Right ventricle myocardium inferior (tissue), 1 donor: ENCODE measurements at regions of chr17 and their contacts with region 1.

Region 1: GRCh38 chr17:38667099-38667786 is 7.5 kb downstream of the EPOP start:
- DNase-seq: peak; percentile 75
- ATAC-seq: peak; percentile 68

Region 2: GRCh38 chr17:38351412-38352222 is 315.6 kb before region 1 on chr17 and contains the start of gene SOCS7:
- intact Hi-C with region 1: loop called (anchors 10 kb)
- DNase-seq: peak; percentile 96
- ATAC-seq: peak; percentile 98
- total RNA-seq, gene SOCS7: 12.0 TPM

Region 3: DNA sequence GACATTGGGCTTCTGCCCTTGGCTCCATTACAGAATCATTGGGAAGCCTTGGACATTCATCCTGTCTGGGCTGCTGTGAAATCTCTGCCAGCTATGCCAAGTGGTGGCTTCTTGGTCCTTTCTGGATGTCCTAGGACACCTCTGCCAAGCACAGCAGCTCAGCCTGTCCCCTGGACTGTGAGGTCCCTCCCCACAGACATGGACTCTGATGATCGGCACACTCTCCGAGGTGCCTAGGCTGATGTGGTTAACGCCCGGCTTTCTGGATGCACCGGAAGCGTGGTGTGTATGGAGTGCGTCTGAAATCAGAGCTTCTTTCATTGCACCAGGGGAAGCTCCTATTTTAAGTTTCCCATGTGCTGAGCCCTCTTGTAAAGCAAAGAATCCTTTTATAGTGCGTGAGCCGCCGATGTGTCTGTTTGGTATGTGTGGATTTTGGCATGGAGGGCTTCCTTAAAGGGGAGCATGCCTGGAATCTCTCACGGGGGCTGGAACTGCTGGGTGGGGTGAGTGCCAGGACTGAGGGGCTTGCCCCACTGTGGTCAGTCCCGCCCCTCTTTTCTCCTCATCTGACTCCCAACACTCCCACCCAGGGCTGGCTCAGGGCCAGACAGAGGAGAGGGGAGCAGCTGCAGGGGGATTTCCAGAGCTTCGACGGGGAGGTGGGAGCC is 245.9 kb before region 1 on chr17:
- intact Hi-C with region 1: loop called (anchors 5 kb)
- DNase-seq: no peak
- ATAC-seq: peak; percentile 5

Region 4: GRCh38 chr17:38485146-38485468 is 182.1 kb before region 1 on chr17:
- intact Hi-C with region 1: loop called (anchors 5 kb)
- DNase-seq: no peak
- ATAC-seq: no peak

Region 5: DNA sequence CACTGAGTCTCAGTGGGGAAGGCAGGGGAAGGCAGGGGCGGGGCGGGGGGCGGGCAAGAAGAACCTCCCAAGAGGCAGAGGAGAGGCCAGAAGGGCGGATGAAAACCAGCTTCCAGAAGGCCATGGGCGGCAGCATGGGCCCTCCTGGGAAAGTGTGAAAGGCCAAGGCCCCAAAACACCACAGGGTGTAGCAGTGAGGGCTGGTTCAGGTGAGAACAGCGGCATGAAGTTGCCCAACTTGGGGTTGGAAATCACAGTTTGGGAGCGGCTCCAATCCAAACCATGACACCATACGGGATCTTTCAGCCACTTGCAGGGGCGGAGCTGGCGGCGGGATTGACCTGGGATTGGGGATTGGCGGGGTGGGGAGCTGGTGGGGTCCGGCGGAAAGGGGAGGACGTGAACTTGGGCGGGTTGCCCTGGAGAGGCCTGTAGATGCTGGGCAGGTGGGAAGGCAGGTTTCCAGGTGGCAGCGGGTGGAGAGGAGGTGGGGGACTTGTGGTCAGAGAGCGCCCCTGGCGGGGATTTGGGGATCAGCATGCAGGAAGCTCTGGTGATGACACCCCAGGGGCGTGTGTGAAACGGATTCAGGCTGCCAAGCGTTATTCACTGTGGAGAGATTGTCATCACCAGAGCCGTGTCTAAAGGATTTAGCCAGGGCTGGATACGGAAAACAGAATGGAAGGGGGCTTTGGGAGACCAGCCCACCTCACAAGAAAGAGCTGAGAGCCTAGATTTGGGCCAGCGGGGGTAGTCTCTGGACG is 158.1 kb before region 1 on chr17:
- intact Hi-C with region 1: loop called (anchors 5 kb)
- DNase-seq: peak; percentile 89
- ATAC-seq: peak; percentile 51

Region 6: DNA sequence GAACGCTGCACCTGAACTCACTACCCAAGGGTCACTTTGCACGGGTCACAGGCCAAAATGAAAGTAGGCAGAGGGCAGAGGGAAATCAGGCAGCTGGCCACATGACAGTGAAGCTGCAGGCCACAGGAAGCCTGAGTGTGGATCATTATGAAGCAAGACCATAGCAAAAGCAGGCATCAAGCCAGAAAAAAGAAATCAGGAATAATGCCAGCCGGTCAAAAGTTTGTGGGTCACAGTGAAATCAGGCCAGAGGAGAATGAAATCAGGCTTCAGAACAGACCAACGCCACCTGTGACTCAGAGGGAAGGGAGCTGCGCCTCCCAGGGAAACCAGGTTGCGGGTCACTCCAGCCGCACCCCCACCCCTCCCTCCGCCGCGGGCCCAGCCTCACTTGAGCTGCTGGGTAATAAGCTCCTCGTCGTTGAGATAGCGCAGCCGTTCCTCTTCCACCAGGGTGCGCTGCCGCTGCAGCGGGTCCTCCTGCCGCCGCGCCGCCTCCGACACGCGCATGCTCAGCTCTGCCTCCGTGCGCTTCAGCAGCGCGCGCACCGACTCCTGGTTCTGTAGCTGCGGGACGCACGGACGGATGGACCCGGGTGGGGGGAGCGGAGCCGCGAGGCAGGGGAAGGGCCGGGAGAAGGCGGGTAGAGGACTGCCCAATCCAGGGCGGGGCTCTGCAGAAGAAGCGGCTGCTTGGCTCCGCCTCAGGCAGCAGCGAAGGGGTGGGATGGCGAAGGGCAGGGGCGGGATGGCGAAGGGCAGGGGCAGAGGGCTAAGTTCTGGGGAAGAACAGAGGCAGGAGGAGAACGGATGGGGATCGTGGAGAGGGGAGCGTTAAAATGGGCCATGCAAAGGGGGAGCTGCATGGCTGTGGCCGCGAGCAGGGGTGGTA is 109.2 kb before region 1 on chr17:
- intact Hi-C with region 1: loop called (anchors 1 kb)
- DNase-seq: peak; percentile 95
- ATAC-seq: peak; percentile 94

Region 7: DNA sequence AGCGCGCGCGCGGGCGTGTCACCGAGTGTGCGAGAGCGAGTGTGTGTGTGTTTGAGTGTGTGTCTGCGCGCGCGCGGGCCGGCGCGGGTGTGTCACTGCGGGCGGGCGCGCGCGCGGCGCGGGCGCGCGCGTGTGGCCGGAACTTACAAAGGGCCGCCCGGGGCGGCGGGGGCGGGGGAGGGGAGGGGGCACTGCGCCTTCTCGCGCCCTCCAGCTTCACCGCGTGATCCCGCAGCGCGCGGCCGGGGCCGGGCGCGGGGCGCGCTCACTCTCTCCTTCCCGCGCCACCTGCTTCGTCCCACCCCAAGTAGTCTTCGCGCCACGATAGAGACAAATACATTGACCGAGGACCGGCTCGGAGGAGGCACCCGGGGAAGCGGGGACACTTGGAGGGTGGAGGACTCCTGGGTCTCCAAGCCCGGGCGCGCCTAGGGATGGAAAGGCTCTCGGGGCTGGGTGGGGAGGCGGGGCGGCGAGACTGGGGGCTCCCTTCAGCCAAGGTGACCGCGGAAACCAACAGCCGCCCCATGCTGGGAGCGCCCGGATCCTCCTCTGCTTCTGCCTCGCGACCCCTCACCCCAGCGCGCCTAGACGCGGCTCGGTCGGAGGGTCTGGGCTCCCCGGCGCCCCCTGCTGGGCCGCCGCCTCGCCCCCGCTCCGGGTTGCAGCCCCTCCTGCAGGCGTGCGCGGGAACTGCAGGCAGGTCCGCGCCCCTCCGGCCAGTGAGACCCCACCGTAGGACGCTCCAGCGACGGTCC is 61.2 kb before region 1 on chr17 and contains the start of gene SRCIN1:
- intact Hi-C with region 1: loop called (anchors 5 kb)
- DNase-seq: peak; percentile 81
- ATAC-seq: no peak
- total RNA-seq, gene SRCIN1: 1.4 TPM